ENCODE measurements at regions of chr18 and their contacts with region 1.

Region 1: DNA sequence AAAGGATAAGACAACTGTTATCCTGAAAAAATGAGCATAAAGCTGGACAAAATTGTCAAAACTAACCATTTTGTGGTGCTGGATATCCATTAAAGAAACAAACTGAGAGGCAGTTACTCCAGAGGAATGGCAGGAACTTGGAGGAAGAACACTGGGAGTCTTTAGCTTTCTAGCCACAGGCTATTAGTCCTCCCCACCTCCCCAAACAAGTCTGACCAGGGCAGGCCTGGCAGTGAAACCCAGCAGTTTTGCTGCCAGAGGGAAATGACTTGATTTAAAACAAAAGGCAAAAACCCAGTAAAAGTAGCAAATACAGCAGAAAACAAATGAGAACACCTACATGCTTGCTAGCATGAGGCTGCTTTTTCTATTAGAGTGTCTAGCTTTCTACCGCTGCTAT is 34.9 kb downstream of the OSBPL1A start:
- DNase-seq: no peak
- ATAC-seq: peak; percentile 54
- H3K4me3 Mint-ChIP-seq: no peak overlapping the region
- H3K27ac Mint-ChIP-seq: peak overlapping the region; percentile 93
- H3K4me1 Mint-ChIP-seq: peaks cover 22% of the 10 kb centered on the region
- H3K27me3 Mint-ChIP-seq: no peaks in the 10 kb centered on the region
- CTCF ChIP-seq: no peak

Region 2: GRCh38 chr18:24380163-24380747 is 17.5 kb after region 1 on chr18:
- CTCF ChIA-PET with region 1: interaction called, 13 read pairs
- POLR2A ChIA-PET with region 1: interaction called, 4 read pairs
- DNase-seq: no peak
- ATAC-seq: peak; percentile 49
- H3K4me3 Mint-ChIP-seq: no peak overlapping the region
- H3K27ac Mint-ChIP-seq: peak overlapping the region; percentile 96
- H3K4me1 Mint-ChIP-seq: peaks cover 50% of the 10 kb centered on the region
- H3K27me3 Mint-ChIP-seq: no peaks in the 10 kb centered on the region
- CTCF ChIP-seq: no peak

Region 3: GRCh38 chr18:24397694-24398365 is 35.1 kb after region 1 on chr18 and contains the start of gene OSBPL1A:
- CTCF ChIA-PET with region 1: interaction called, 20 read pairs
- POLR2A ChIA-PET with region 1: interaction called, 5 read pairs
- DNase-seq: peak; percentile 98
- ATAC-seq: peak; percentile 96
- H3K4me3 Mint-ChIP-seq: peak within 1 kb of the TSS; percentile 88
- H3K27ac Mint-ChIP-seq: peak within 1 kb of the TSS; percentile 94
- H3K4me1 Mint-ChIP-seq: peaks cover 59% of the 10 kb centered on the region
- H3K27me3 Mint-ChIP-seq: no peaks in the 10 kb centered on the region
- CTCF ChIP-seq: no peak
- total RNA-seq, gene OSBPL1A: 53.1 to 55.1 TPM (median 54.4 TPM) in 3 replicates

Region 4: GRCh38 chr18:24413148-24413547 is 50.4 kb after region 1 on chr18:
- CTCF ChIA-PET with region 1: interaction called, 51 read pairs
- POLR2A ChIA-PET with region 1: no interaction called
- DNase-seq: peak; percentile 58
- ATAC-seq: peak; percentile 85
- H3K4me3 Mint-ChIP-seq: no peak overlapping the region
- H3K27ac Mint-ChIP-seq: no peak overlapping the region
- H3K4me1 Mint-ChIP-seq: peaks cover 19% of the 10 kb centered on the region
- H3K27me3 Mint-ChIP-seq: peaks cover 9% of the 10 kb centered on the region
- CTCF ChIP-seq: no peak

Measured in WTC11 (cell line).